Spleen (tissue), 13 donors: ENCODE measurements at regions of chr2 and their contacts with region 1.

Region 1: DNA sequence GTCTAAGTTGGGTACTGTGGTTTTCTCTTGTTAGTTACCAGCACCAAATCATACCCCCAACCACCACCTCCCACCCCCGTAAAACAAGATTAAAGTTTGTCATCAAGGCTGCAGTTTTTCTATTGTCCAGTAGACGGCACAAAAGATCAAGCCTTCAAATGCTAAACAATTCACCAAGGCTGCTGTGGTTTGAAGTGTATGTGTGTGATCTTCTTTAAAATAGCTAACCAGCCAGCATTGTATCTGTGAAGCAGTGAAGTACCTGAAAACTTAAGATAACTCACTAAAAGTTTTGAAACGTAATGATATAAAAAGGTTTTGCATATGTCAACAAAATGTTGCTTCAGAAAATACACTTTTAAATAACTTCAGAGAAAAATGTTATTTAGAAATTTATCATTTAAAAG is 5.9 kb upstream of the MEIS1 start:
- DNase-seq: no peak
- H3K4me3 ChIP-seq: no peak overlapping the region
- H3K27ac ChIP-seq: no peak overlapping the region
- H3K4me1 ChIP-seq: peaks cover 0 to 45% (median 15%) of the 10 kb centered on the region in 6 donors
- H3K27me3 ChIP-seq: peaks cover 0 to 98% (median 47%) of the 10 kb centered on the region in 7 donors
- CTCF ChIP-seq: peak in 10 of 11 experiments; percentile 37 to 75 (median 57)
- POLR2A ChIP-seq: no peak

Region 2: DNA sequence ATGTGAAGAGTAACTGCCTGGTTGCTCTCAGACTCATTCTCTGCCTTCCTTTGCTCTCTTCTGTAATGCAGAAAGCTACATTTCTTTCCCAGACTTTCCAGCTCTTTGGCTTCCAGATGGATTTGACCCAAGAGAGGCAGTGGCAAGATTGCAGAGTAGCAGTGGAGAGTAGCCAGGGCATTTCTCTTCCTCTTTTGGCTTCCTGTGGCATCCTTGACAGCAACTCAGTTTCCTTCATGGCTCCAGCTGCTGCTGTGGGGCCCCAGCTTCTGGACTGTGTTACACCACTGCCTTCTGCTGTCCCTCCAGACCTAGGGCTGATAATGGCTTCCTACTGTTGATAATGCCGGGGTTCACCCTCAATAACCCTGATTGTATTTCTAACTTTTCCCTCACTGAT is 527.3 kb before region 1 on chr2:
- intact Hi-C with region 1: no loop called
- DNase-seq: no peak
- H3K4me3 ChIP-seq: no peak overlapping the region
- H3K27ac ChIP-seq: no peak overlapping the region
- H3K4me1 ChIP-seq: no peaks in the 10 kb centered on the region
- H3K27me3 ChIP-seq: no peaks in the 10 kb centered on the region
- CTCF ChIP-seq: no peak
- POLR2A ChIP-seq: no peak

Region 3: DNA sequence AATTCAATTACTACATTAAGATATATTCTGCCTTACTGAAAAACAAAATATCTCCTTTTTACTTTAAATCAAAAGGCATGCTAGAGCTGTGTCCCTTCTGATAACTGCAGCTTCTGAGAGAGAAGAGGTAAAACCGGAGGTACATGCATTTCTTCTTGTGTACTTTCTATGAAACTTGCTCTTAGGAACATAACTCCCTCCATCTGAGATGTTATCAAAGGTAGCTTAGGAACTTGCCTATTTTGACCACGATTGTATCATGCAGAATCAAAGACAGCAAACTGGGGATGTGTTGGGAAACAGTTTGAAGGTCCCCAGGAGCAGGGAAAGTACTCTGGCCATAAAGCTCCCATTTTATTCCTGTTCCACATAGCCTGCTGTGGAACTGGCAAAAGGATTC is 207.9 kb before region 1 on chr2:
- intact Hi-C with region 1: no loop called
- DNase-seq: no peak
- H3K4me3 ChIP-seq: no peak overlapping the region
- H3K27ac ChIP-seq: no peak overlapping the region
- H3K4me1 ChIP-seq: no peaks in the 10 kb centered on the region
- H3K27me3 ChIP-seq: peaks cover 0 to 4% (median 0%) of the 10 kb centered on the region in 7 donors
- CTCF ChIP-seq: no peak
- POLR2A ChIP-seq: no peak

Region 4: GRCh38 chr2:67840460-67841068 is 1411.5 kb after region 1 on chr2:
- intact Hi-C with region 1: loop called (anchors 10 kb)
- DNase-seq: peak; percentile 82
- H3K4me3 ChIP-seq: no peak overlapping the region
- H3K27ac ChIP-seq: no peak overlapping the region
- H3K4me1 ChIP-seq: no peaks in the 10 kb centered on the region
- H3K27me3 ChIP-seq: peaks cover 0 to 14% (median 0%) of the 10 kb centered on the region in 7 donors
- CTCF ChIP-seq: peak in 10 of 11 experiments; percentile 21 to 68 (median 60)
- POLR2A ChIP-seq: no peak